ENCODE measurements at regions of chr19 and their contacts with region 1.

Region 1: GRCh38 chr19:57240311-57241090 is at the start of gene ZNF805:
- DNase-seq: peak; percentile 96
- H3K4me3 ChIP-seq: peak within 1 kb of the TSS; percentile 94
- H3K27ac ChIP-seq: peak within 1 kb of the TSS; percentile 80
- H3K4me1 ChIP-seq: peaks cover 17% of the 10 kb centered on the region
- H3K27me3 ChIP-seq: no peaks in the 10 kb centered on the region
- CTCF ChIP-seq: no peak
- total RNA-seq, gene ZNF805: 6.2 to 11.4 TPM

Region 2: DNA sequence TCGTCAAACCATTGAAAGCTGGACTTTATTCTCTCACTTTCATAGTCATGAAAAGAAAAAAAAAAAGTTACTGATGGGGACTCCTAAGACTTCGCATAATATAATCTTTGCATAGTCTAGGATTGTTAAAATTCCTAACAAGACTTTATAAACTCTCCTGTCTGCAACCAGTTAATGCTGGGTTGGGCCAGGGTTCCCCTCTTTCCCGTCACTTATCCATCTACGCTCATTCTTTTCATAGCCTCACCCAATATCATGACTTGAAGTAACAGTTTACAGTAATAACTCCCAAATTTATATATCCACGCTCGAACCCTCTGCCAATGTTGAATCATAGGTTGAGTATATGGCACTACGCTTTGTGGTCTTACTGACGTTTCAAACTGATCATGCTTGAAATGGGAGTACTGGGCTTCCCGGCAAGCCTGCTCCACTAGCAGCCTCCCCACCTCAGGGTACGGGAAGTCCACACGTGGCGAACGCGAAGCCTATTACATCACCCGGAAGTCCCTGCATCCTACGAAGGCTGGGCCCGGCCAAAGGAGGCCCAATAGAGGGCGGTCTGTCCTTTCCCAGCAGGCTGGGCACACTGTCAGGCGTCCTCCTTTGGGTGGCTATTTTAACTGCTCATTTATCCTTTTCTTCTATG is 39.0 kb after region 1 on chr19:
- intact Hi-C with region 1: loop called (anchors 5 kb)
- DNase-seq: peak; percentile 91
- H3K4me3 ChIP-seq: peak overlapping the region; percentile 93
- H3K27ac ChIP-seq: peak overlapping the region; percentile 96
- H3K4me1 ChIP-seq: peaks cover 8% of the 10 kb centered on the region
- H3K27me3 ChIP-seq: no peaks in the 10 kb centered on the region
- CTCF ChIP-seq: no peak

Measured in colonic mucosa (tissue), 4 donors.